ENCODE measurements at regions of chr5 and their contacts with region 1.

Region 1: DNA sequence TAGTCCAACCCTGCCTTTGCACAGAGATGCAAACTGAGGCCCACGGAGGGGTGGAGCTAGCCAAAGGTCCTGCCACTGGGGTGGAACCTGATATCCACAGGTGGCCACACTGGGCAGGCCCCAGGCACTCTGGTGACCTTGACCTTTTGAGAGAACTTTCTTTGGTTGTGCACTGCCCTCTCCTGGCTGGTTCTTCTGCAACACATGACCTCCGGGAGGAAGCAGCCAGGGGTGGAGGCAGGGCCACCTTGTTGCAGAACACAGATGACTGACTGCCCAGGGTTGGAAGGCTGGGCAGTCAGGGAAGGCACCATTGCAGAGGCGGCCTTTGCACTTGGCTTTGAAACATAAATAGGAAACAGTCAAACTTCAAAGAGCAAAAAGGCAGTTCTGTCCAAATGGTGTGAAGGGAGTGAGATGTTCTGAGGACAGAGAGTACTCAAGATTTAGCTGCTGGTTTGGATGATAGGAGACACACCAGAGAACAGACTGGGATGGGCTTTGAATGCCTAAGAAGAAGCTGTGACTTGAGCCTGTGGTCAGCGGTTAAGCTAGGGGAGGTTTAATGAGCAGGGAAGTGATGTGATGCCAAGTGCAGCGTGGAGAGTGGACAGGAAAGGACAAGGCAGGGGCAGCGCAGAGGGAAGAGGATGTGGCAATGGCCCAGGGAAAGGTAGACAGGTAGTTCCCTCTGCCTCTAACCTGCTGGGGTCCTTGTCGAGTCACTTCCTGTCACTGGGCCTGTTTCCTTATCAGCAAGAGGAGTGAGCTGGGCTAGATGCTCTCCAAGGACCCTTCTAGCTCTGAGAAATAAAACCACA is 6.8 kb upstream of the TCOF1 start:
- DNase-seq: peak; percentile 77 to 90 (median 79)
- ATAC-seq: peak; percentile 91
- H3K4me3 ChIP-seq: no peak overlapping the region
- H3K4me1 ChIP-seq: peaks cover 15% of the 10 kb centered on the region
- CTCF ChIP-seq: peak; percentile 40

Region 2: DNA sequence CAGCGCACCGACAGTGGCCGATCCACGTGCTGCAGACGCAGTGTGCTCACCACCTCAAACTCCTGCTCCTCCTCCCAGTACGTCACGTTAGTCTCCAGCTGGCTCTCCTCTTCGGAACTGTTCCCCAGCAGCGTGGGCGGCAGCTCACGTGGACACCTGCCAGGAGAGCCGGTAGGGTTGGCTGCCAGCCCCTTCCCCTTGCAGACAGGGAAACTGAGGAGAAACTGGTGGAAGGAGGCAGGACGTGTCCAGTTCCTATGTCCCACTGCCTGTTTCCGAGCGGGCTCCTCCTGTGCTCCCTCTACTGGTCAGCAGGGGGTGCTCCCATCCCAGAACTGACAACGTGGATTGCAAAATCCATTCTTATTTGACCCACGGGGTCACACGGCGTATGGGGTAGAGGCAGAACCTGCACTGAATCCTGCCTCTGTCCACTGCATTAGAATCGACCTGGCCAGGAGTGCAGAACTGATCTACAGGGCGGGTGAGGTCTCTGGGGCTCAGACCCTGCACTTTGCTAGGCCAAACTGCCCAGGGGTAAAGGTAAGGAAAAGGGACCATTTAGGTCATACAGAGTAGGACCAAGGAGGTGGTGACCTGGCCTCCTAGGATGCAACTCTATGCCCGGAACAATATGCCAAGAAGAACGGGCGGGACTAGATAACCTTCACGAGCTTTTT is 220.8 kb before region 1 on chr5:
- intact Hi-C with region 1: loop called in 1 of 2 experiments (anchors 5 kb)
- DNase-seq: peak in 2 of 3 donors; percentile 83 to 85
- ATAC-seq: peak; percentile 89
- H3K4me3 ChIP-seq: no peak overlapping the region
- H3K4me1 ChIP-seq: peaks cover 13% of the 10 kb centered on the region
- CTCF ChIP-seq: peak; percentile 82

Measured in mucosa of descending colon (tissue), 3 donors.